CD4-positive, alpha-beta memory T cell (primary cell): ENCODE measurements at regions of chr2 and their contacts with region 1.

Region 1: DNA sequence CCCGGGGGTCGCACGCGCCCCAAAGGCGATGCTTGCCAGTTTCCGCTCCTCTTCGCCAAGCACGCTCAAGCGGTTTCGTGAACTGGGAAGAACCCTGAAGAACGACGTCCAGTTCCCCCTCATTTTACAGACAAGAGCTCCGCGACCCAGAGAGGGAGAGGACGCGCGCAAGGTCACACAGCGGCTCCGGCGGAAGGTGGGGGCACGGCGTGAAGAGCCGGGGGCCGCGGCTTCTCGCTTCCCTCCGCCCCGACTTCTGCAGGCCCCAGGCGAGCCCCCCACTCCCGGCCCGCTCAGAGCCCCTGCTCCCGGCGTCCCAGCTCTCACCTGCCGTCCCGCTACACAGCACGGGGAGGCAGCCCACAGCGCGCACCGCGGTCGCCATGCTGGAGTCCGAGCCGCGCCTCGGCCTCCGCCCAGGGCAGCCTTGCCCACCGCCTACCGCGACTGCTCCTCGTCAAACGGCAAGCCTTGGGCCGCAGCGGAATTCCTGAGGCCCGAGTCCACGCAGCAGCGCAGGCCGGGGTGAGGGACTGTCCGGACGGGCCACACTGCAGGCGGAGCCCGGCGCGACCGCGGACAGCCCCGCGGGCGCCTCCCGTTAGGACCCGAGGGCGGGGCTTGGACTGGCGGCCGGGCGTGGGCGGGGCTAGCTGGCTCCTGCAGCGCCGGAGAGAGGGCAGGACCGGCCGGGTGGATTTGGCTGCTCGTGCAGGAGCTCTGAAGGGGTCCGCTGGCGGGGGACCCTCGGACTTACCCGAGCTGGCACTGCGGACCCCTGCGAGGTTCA is at the start of gene MRPS5:
- DNase-seq: peak; percentile 77 to 86 (median 78)
- H3K4me3 ChIP-seq: peak within 1 kb of the TSS; percentile 74 to 76
- H3K4me3 Mint-ChIP-seq: peak within 1 kb of the TSS; percentile 94 to 99 (median 96)
- H3K27ac ChIP-seq: peak within 1 kb of the TSS; percentile 79
- H3K27ac Mint-ChIP-seq: peak within 1 kb of the TSS; percentile 89 to 97 (median 95)
- H3K4me1 ChIP-seq: peaks cover 36% of the 10 kb centered on the region
- H3K4me1 Mint-ChIP-seq: peaks cover 36 to 55% (median 42%) of the 10 kb centered on the region in 4 donors
- H3K27me3 ChIP-seq: no peaks in the 10 kb centered on the region
- H3K27me3 Mint-ChIP-seq: peaks cover 0 to 2% of the 10 kb centered on the region in 2 donors
- total RNA-seq, gene MRPS5: 66.0 to 70.6 TPM

Region 2: DNA sequence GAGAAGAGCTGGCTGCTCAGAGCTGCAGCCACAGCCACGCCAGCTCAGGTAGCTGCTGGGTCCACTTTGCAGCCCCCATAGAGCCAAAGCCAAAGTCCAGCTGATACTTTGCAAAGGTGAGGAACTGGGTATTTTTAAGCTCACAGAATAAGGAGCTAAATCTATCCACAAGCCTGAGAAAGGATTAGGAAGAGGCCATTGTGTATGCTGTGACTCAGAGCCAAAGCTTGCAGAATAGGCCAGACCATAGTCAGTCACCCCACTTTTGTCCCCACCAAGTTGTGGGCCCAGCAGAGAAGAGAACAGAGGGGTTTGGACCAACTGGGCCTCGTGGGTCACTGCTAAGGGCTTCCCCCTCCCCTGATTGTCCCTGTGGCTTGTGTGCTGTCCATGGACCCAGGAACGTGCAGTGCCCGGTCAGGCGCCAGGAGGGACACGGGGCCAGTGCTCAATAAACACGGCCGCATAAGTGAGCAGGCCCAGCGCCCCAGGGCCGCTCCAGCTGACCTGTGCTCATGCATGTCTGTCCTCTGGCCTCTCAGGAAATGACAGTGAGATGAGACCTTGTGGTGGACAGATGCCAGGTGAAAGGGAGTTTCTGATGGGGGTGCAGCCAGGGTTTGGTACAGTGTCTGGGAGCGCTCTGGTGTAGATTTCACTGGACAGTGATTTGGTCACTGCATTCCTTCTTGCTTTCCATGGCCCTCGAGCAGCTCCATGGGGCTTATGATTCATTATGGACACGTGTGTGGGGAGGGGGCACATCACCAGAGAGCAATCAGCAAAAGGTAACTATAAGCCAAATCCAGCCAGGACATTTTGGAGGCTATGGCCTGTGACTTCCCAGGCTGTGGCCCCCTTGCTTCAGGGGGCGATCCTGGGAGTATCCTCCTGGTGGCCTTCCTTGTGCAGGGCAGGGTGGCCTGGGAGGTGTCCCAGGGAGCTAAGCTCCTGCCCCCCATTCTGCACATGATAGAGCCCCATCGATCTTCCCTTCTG is 64.8 kb before region 1 on chr2:
- CTCF ChIA-PET with region 1: no interaction called
- POLR2A ChIA-PET with region 1: no interaction called
- intact Hi-C with region 1: no loop called
- DNase-seq: no peak
- H3K4me3 ChIP-seq: no peak overlapping the region
- H3K4me3 Mint-ChIP-seq: no peak overlapping the region
- H3K27ac ChIP-seq: no peak overlapping the region
- H3K27ac Mint-ChIP-seq: peak overlapping the region in 5 of 7 donors; percentile 32 to 79 (median 66)
- H3K4me1 ChIP-seq: peaks cover 51% of the 10 kb centered on the region
- H3K4me1 Mint-ChIP-seq: peaks cover 23 to 56% (median 40%) of the 10 kb centered on the region in 4 donors
- H3K27me3 ChIP-seq: no peaks in the 10 kb centered on the region
- H3K27me3 Mint-ChIP-seq: no peaks in the 10 kb centered on the region

Region 3: GRCh38 chr2:95143838-95144237 is 22.2 kb after region 1 on chr2:
- CTCF ChIA-PET with region 1: no interaction called
- POLR2A ChIA-PET with region 1: no interaction called
- intact Hi-C with region 1: no loop called
- DNase-seq: no peak
- H3K4me3 ChIP-seq: no peak overlapping the region
- H3K4me3 Mint-ChIP-seq: no peak overlapping the region
- H3K27ac ChIP-seq: no peak overlapping the region
- H3K27ac Mint-ChIP-seq: no peak overlapping the region
- H3K4me1 ChIP-seq: no peaks in the 10 kb centered on the region
- H3K4me1 Mint-ChIP-seq: no peaks in the 10 kb centered on the region
- H3K27me3 ChIP-seq: no peaks in the 10 kb centered on the region
- H3K27me3 Mint-ChIP-seq: no peaks in the 10 kb centered on the region

Region 4: DNA sequence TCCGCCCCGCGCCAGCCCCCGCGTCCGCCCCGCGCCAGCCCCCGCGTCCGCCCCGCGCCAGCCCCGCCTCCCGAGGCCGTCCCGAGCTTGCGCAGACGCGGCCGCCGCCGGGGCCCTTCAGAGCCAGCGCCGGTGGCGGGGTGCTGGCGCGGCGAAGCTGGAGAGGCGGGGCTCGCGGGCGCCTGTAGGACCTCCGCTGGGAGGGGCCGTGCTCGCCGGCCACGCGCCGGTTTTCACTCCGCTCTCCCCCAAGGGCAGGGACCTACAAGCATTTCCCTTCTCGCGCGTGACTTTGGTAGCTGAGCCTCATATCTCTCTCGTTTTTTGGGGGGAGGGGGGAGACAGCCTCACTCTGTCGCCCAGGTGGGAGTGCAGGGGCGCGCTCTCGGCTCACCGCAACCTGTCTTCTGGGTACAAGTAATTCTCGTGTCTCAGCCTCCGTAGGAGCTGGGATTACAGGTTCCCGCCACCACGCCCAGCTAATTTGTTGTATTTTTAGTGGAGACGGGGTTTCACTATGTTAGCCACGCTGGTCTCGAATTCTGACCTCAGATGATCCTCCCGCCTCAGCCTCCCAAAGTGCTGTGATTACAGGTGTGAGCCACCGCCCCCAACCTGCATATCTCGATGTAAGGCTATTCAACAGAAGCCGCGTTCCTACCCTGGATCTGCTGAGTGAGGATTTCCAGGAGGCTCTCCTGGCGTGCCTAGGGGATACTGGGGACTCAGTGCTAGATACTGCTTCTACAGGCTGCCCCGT is 38.3 kb after region 1 on chr2 and contains the start of gene ZNF514:
- CTCF ChIA-PET with region 1: interaction called, 18 read pairs
- POLR2A ChIA-PET with region 1: interaction called, 42 read pairs
- intact Hi-C with region 1: loop called (anchors 1 kb)
- DNase-seq: peak; percentile 70 to 82 (median 74)
- H3K4me3 ChIP-seq: peak within 1 kb of the TSS; percentile 32 to 74
- H3K4me3 Mint-ChIP-seq: peak within 1 kb of the TSS; percentile 86 to 94 (median 90)
- H3K27ac ChIP-seq: peak within 1 kb of the TSS; percentile 57
- H3K27ac Mint-ChIP-seq: peak within 1 kb of the TSS; percentile 77 to 95 (median 89)
- H3K4me1 ChIP-seq: peaks cover 24% of the 10 kb centered on the region
- H3K4me1 Mint-ChIP-seq: peaks cover 5 to 35% (median 13%) of the 10 kb centered on the region in 4 donors
- H3K27me3 ChIP-seq: no peaks in the 10 kb centered on the region
- H3K27me3 Mint-ChIP-seq: no peaks in the 10 kb centered on the region
- total RNA-seq, gene ZNF514: 35.2 to 37.1 TPM

Region 5: DNA sequence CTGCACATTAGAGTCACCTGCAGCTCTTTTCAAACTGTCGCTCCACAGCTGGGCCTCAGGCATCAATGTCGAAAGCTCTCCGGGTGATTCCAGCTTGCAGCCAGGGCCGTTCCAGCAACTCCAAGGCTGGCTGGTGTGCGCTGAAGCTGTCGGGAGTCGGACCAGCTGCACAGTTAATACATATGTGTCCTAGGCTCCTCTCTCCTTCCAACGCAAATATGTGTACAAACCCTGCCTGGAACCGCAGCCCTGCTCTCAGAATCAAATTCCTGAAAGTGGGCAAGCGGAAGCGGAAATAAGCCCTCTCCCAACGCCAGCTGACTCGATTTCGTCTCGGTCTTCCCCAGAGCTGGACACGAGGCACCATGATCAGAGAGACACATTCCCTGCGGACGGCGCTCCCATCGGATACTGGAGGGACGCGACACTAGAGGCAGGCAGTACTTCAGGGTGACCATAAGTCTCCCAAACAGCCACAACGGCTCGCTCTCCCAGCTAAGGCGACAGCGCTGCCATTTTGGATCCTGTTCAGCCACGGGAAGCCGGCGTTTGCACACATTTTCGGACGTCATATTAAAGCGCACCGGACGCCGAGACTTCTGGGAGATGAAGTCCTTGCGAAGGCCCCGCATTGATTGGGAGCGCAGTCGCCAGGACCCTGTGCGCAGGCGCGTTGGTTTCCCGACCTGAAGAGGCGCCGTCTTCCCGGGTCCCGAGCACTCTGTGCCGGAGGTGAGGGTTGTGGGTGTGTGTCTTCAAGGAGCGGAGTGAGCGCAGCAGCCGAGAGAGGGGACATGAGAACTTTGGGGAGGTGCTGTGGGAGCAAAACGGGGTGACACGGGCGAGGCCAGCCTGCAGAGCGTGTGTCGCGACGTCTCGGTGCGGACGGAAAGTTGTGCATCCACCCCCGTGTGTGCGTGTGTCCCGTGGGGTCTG is 43.8 kb after region 1 on chr2 and contains the start of gene ZNF2:
- CTCF ChIA-PET with region 1: interaction called, 18 read pairs
- POLR2A ChIA-PET with region 1: interaction called, 42 read pairs
- intact Hi-C with region 1: loop called (anchors 1 kb)
- DNase-seq: peak; percentile 95 to 98 (median 96)
- H3K4me3 ChIP-seq: peak within 1 kb of the TSS; percentile 88 to 97
- H3K4me3 Mint-ChIP-seq: peak within 1 kb of the TSS; percentile 95 to 100 (median 100)
- H3K27ac ChIP-seq: peak within 1 kb of the TSS; percentile 89
- H3K27ac Mint-ChIP-seq: peak within 1 kb of the TSS; percentile 94 to 99 (median 98)
- H3K4me1 ChIP-seq: peaks cover 21% of the 10 kb centered on the region
- H3K4me1 Mint-ChIP-seq: peaks cover 24 to 40% (median 35%) of the 10 kb centered on the region in 4 donors
- H3K27me3 ChIP-seq: no peaks in the 10 kb centered on the region
- H3K27me3 Mint-ChIP-seq: no peaks in the 10 kb centered on the region
- total RNA-seq, gene ZNF2: 8.3 to 10.1 TPM

Region 6: DNA sequence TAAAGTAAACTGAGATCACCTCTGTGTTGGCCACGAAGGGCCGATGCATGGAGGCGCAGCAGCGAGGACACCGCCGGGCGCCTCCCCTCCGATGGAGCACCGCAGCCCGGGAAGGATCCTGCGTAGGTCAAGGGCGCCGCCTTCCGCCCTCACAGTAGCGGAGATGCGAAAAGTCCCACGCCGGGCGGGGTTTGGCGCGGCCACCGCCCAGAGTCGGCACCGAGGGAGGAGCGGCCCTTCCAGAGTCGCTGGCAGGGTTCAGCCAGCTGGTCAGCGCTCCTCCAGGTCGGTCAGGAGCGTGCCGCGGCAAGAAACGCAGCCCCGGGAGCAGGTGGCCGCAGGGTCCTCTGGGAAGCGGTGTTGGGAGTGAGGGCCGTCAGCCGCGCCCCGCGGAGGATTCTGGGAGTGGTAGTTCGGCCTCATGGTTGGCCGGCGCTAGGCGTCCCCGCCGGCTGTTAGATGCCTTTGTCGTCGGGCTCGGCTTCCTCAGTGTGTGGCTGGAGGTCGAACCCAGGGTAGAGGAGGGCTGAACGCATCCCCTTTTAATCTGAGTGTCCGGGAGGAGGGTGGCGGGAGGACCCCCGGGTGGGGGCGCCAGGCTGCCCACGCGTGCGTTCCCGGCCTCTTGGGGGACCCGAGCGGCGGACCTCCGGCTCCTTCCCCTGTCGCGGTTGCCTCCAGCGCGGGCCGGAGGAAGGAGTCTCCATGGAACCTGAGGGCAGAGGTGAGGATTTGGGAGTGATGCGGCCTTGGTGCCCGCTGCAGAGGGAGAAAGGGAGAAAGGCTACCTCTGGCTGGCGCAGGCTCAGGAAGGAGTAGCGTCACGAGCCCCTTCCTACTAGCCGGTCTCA is 85.7 kb after region 1 on chr2 and contains the start of gene ZNF892:
- CTCF ChIA-PET with region 1: no interaction called
- POLR2A ChIA-PET with region 1: no interaction called
- intact Hi-C with region 1: loop called (anchors 1 kb)
- DNase-seq: peak; percentile 68 to 78 (median 69)
- H3K4me3 ChIP-seq: peak within 1 kb of the TSS; percentile 47 to 93
- H3K4me3 Mint-ChIP-seq: peak within 1 kb of the TSS; percentile 93 to 97 (median 96)
- H3K27ac ChIP-seq: peak within 1 kb of the TSS; percentile 70
- H3K27ac Mint-ChIP-seq: peak within 1 kb of the TSS; percentile 71 to 92 (median 90)
- H3K4me1 ChIP-seq: peaks cover 15% of the 10 kb centered on the region
- H3K4me1 Mint-ChIP-seq: peaks cover 11 to 19% (median 15%) of the 10 kb centered on the region in 4 donors
- H3K27me3 ChIP-seq: no peaks in the 10 kb centered on the region
- H3K27me3 Mint-ChIP-seq: no peaks in the 10 kb centered on the region
- total RNA-seq, gene ZNF892: 4.7 to 5.9 TPM